Mammary epithelial cell (primary cell): ENCODE measurements at regions of chr2 and their contacts with region 1.

Region 1: GRCh38 chr2:192369969-192370368 is 175.2 kb upstream of the TMEFF2 start:
- DNase-seq: no peak
- H3K4me3 ChIP-seq: no peak overlapping the region
- H3K27ac ChIP-seq: no peak overlapping the region
- H3K4me1 ChIP-seq: no peaks in the 10 kb centered on the region
- H3K27me3 ChIP-seq: no peaks in the 10 kb centered on the region
- CTCF ChIP-seq: no peak

Region 2: DNA sequence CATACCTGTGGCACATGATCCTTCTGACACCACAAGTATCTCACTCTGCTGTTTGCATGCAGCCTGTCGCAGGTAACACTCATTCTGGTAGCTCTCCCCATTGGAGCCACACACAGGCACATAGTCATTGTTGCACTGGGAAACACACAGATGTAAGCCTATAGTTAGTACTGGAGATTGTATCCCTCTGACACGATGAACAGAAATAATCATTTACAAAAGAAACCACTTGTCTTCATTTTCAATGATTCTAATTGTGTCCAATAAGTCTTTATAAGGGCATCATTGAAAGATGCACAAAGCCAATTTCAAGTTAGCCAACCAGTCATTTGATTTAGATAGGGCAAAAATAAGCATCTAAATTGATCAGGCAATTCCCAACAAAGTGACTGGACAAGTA is 185.6 kb before region 1 on chr2:
- CTCF ChIA-PET with region 1: no interaction called
- dilution Hi-C with region 1: no loop called
- in situ Hi-C with region 1: no loop called
- intact Hi-C with region 1: no loop called
- DNase-seq: no peak
- H3K4me3 ChIP-seq: no peak overlapping the region
- H3K27ac ChIP-seq: no peak overlapping the region
- H3K4me1 ChIP-seq: no peaks in the 10 kb centered on the region
- H3K27me3 ChIP-seq: peaks cover 16% of the 10 kb centered on the region
- CTCF ChIP-seq: no peak

Region 3: DNA sequence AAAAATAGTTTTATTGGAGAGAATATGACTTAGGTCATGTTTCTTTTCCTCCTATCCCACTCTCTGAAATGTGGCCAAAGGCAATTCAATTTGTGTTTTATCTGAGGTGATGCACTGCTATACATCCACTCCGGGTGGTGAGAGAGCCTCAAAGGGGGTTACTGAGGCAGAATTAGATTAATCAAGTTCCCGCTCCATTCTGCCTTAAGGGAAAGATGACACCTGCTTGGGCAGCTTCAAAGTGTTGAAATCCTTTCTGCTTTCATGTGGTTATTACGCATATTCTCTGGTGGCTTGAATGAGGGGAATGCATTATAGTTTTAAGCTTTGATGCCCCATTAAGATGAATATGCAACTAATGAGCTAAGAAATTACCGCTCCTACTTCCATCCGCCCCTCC is 37.7 kb after region 1 on chr2:
- CTCF ChIA-PET with region 1: no interaction called
- dilution Hi-C with region 1: no loop called
- in situ Hi-C with region 1: no loop called
- intact Hi-C with region 1: loop called (anchors 2 kb)
- DNase-seq: no peak
- H3K4me3 ChIP-seq: no peak overlapping the region
- H3K27ac ChIP-seq: no peak overlapping the region
- H3K4me1 ChIP-seq: no peaks in the 10 kb centered on the region
- H3K27me3 ChIP-seq: peaks cover 3% of the 10 kb centered on the region
- CTCF ChIP-seq: no peak

Region 4: GRCh38 chr2:192419786-192420185 is 49.8 kb after region 1 on chr2:
- CTCF ChIA-PET with region 1: no interaction called
- dilution Hi-C with region 1: no loop called
- in situ Hi-C with region 1: no loop called
- intact Hi-C with region 1: no loop called
- DNase-seq: no peak
- H3K4me3 ChIP-seq: no peak overlapping the region
- H3K27ac ChIP-seq: no peak overlapping the region
- H3K4me1 ChIP-seq: no peaks in the 10 kb centered on the region
- H3K27me3 ChIP-seq: no peaks in the 10 kb centered on the region
- CTCF ChIP-seq: no peak